ENCODE measurements at regions of chr9 and their contacts with region 1.

Region 1: DNA sequence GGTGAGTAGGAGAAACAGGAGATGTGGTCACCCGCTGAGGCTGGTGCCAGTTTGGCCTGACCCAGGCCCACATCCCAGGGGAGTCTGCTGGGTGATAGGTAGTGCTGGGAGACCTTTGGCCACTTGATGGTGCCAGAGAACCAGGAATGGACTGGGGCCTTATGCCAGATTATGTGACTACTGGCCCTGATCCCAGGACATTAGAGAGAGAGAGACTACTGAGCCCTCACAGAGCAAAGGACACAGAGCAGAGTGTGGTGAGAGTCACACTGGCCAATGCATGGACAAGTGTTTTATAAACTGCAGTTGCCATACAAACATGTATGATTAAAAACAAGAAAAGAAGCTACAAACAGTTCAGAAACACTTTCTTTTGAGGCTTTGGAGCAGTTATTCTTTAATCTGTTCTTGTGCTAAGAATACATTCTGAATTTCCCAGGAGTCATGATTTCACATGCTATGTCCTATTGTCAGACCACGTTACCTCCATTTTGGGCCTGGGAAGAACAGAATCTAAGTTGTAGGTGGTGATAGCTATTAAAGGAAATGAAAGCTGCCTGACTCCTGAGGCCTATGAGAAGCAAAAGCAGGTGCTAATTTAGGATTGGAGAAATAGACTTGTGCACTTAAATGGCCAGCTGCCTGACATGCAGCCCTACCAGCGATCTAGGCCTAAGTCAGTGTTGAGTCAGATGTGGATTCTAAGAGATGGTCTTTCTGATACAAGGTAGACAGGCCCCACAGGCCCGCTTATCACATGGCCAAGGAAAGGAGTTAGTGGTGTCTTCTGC is 32.6 kb upstream of the TMOD1 start:
- DNase-seq: peak; percentile 16
- H3K4me3 ChIP-seq: no peak overlapping the region
- H3K27ac ChIP-seq: no peak overlapping the region
- H3K27me3 ChIP-seq: no peaks in the 10 kb centered on the region
- CTCF ChIP-seq: peak; percentile 82

Region 2: GRCh38 chr9:97440160-97440559 is 28.7 kb before region 1 on chr9:
- CTCF ChIA-PET with region 1: interaction called, 13 read pairs
- POLR2A ChIA-PET with region 1: no interaction called
- DNase-seq: no peak
- H3K4me3 ChIP-seq: no peak overlapping the region
- H3K27ac ChIP-seq: no peak overlapping the region
- H3K27me3 ChIP-seq: no peaks in the 10 kb centered on the region
- CTCF ChIP-seq: no peak

Region 3: GRCh38 chr9:97487107-97487506 is 18.3 kb after region 1 on chr9:
- CTCF ChIA-PET with region 1: interaction called, 17 read pairs
- POLR2A ChIA-PET with region 1: no interaction called
- DNase-seq: no peak
- H3K4me3 ChIP-seq: no peak overlapping the region
- H3K27ac ChIP-seq: no peak overlapping the region
- H3K27me3 ChIP-seq: no peaks in the 10 kb centered on the region
- CTCF ChIP-seq: peak; percentile 52

Region 4: DNA sequence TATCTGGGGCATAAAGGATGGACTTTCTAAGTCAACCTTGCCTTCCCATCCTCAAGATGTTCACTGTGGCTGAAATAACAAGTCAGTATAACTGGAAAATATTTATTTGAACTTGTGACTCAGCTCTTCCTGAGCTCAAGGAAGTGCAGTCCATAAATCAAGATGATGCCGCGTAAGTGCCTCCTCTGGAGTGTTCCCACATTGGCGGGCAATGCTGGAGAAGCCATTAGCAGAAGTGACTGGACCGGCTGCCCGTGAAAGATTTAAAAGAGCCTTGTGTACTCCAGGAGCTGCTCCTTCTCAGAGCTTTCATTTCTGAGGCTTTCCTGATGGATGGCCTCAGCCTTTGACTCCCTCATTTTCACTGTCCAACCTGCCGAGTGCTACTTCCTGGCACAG is 50.1 kb after region 1 on chr9:
- CTCF ChIA-PET with region 1: interaction called, 10 read pairs
- POLR2A ChIA-PET with region 1: no interaction called
- DNase-seq: peak; percentile 46
- H3K4me3 ChIP-seq: no peak overlapping the region
- H3K27ac ChIP-seq: peak overlapping the region; percentile 21
- H3K27me3 ChIP-seq: peaks cover 28% of the 10 kb centered on the region
- CTCF ChIP-seq: no peak

Region 5: DNA sequence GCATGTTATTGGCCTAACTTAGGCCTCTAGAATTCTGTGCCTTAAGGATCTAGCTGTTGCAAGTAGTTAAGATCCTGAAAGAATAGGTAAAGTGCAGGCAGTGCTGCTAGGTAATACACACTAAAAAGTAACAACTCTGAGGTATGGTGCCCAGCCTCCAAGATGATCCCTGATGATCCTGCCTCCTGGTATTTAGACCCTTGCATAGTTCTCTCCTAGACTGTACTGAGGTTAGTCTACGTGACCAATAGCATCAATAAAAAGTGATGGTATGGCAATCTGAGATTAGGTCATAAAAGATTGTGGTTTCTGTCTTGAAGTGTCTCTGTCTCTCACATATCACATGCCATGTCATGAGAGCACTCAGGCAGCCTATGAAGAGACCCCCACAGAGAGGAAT is 155.1 kb after region 1 on chr9:
- CTCF ChIA-PET with region 1: interaction called, 32 read pairs
- POLR2A ChIA-PET with region 1: no interaction called
- DNase-seq: no peak
- H3K4me3 ChIP-seq: no peak overlapping the region
- H3K27ac ChIP-seq: no peak overlapping the region
- H3K27me3 ChIP-seq: no peaks in the 10 kb centered on the region
- CTCF ChIP-seq: no peak

Region 6: GRCh38 chr9:97632985-97633858 is 164.4 kb after region 1 on chr9 and contains the starts of genes NCBP1 and TSTD2:
- CTCF ChIA-PET with region 1: interaction called, 12 read pairs
- POLR2A ChIA-PET with region 1: interaction called, 5 read pairs
- DNase-seq: peak; percentile 96
- H3K4me3 ChIP-seq: peak within 1 kb of the TSS; percentile 97
- H3K27ac ChIP-seq: peak within 1 kb of the TSS; percentile 100
- H3K27me3 ChIP-seq: no peaks in the 10 kb centered on the region
- CTCF ChIP-seq: 0 out of 2 replicates have a peak, but pooled peaks have one; percentile 2
- polyA plus RNA-seq, gene NCBP1: 28.8 and 39.2 TPM in 2 replicates
- polyA plus RNA-seq, gene TSTD2: 17.1 and 17.3 TPM in 2 replicates

Measured in AG04450 (cell line).